ENCODE measurements at regions of chr11 and their contacts with region 1.

Region 1: GRCh38 chr11:56188602-56189001 is 12.2 kb downstream of the OR5J2 start:
- DNase-seq: no peak
- ATAC-seq: no peak
- H3K4me3 ChIP-seq: no peak overlapping the region
- H3K27ac ChIP-seq: no peak overlapping the region
- H3K4me1 ChIP-seq: no peaks in the 10 kb centered on the region
- H3K27me3 ChIP-seq: no peaks in the 10 kb centered on the region
- CTCF ChIP-seq: no peak

Region 2: GRCh38 chr11:56234155-56234554 is 45.6 kb after region 1 on chr11 and contains the start of gene OR5T2:
- intact Hi-C with region 1: loop called in 1 of 10 experiments (anchors 2 kb)
- DNase-seq: no peak
- ATAC-seq: no peak
- H3K4me3 ChIP-seq: no peak within 1 kb of the TSS
- H3K27ac ChIP-seq: no peak within 1 kb of the TSS
- H3K4me1 ChIP-seq: no peaks in the 10 kb centered on the region
- H3K27me3 ChIP-seq: no peaks in the 10 kb centered on the region
- CTCF ChIP-seq: no peak
- total RNA-seq, gene OR5T2: not detected

Measured in heart right ventricle (tissue), 16 donors.